Heart left ventricle (tissue), 16 donors: ENCODE measurements at regions of chr19 and their contacts with region 1.

Region 1: DNA sequence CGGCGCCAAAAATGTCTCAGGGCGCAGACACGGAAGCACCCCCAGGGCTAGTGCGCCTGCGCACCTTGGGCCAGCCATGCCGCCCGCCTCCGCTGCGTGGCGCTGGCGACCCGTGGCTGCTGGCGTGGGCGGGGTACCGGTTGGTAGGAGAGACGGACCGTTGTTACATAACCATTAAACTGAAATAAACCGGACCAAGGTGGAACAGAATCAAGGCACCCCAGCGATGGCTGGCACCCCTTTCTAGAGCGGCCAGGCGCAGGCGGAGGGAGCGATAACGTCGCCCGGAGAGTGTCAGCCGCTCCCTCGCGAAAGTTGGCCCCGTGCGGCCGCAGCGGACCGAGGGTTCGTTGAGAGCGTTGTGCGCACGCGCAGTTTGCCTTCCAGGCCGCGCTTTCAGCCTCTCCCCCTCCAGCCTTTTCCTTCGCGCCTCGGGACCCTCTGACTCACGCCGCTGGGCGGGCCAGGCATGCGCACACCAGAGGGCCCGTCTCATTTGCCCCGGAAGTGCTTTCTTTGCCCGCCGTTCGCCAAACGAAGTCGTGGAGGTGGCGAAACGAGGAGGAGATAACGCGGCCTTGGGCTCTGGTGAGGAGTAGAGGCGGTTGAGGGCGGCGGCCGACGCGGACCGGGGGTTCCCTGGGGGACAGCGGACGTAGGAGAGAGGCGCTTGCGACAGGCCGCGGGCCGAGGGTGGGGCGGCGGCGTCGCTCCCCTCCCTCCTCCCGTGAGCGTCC is at the starts of genes PLEKHJ1 and SF3A2:
- DNase-seq: peak; percentile 97 to 99 (median 98)
- ATAC-seq: peak; percentile 91 to 95 (median 94)
- H3K4me3 ChIP-seq: peak within 1 kb of the TSS; percentile 72 to 98 (median 94)
- H3K27ac ChIP-seq: peak within 1 kb of the TSS; percentile 92 to 100 (median 99)
- H3K4me1 ChIP-seq: peaks cover 14 to 75% (median 54%) of the 10 kb centered on the region in 12 donors
- H3K27me3 ChIP-seq: no peaks in the 10 kb centered on the region
- CTCF ChIP-seq: peak; percentile 92 to 100 (median 98)
- POLR2A ChIP-seq: peak in 1 of 2 donors; percentile 52
- total RNA-seq, gene PLEKHJ1: 44.6 to 63.2 (median 46.5) TPM
- total RNA-seq, gene SF3A2: 19.2 to 43.9 (median 28.6) TPM

Region 2: GRCh38 chr19:2161688-2162053 is 74.8 kb before region 1 on chr19:
- intact Hi-C with region 1: loop called in 8 of 10 experiments (anchors 1 to 10 kb)
- DNase-seq: no peak
- ATAC-seq: no peak
- H3K4me3 ChIP-seq: no peak overlapping the region
- H3K27ac ChIP-seq: no peak overlapping the region
- H3K4me1 ChIP-seq: peaks cover 2 to 31% (median 21%) of the 10 kb centered on the region in 12 donors
- H3K27me3 ChIP-seq: no peaks in the 10 kb centered on the region
- CTCF ChIP-seq: no peak
- POLR2A ChIP-seq: no peak

Region 3: GRCh38 chr19:2168619-2169424 is 67.7 kb before region 1 on chr19:
- intact Hi-C with region 1: loop called in 2 of 10 experiments (anchors 1 to 5 kb)
- DNase-seq: peak; percentile 95 to 99 (median 96)
- ATAC-seq: peak; percentile 89 to 95 (median 94)
- H3K4me3 ChIP-seq: peak overlapping the region in 8 of 12 donors; percentile 1 to 48 (median 30)
- H3K27ac ChIP-seq: peak overlapping the region; percentile 72 to 98 (median 94)
- H3K4me1 ChIP-seq: peaks cover 33 to 91% (median 76%) of the 10 kb centered on the region in 12 donors
- H3K27me3 ChIP-seq: no peaks in the 10 kb centered on the region
- CTCF ChIP-seq: peak in 4 of 12 donors; percentile 1 to 27 (median 16)
- POLR2A ChIP-seq: peak in 1 of 2 donors; percentile 52

Region 4: DNA sequence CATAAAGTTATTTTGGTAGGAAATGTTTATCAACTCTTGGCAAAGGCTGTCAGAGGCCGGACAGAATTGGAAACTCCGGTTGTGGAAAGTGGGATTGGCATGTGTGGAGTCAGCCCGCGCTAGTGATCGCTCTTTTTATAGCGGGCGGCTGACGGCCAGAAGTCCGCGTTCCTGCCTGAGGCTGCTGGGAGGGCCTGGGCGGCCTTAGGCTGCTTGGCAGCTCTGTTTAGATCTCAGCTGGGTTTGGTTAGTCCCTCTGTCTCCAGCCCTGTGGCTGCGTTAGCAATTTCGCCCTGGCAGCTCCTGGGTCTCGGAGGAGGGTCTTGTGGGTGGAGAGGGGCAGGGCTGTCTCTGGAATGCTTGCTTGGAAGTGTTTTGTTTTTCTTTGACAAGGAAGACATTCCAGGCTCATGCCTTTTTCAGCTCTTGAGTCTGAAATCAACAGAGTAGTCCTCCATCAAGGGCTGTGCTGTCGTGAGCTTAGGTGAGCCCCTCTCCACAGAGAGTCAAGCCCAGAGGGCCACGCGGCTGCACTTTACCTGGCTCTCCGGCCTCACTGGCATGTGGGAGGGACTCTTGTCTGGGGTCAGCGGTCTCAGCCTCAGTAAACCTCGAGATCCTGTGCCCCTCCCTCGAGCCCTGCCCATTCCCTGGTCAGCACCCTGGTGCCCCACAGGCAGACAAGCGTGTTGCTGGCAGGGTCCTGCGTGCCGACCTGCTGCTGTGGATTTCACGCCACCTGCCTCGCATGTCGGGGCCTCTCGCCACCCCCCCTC is 50.2 kb before region 1 on chr19:
- intact Hi-C with region 1: loop called in 1 of 10 experiments (anchors 1 kb)
- DNase-seq: peak; percentile 87 to 93 (median 88)
- ATAC-seq: peak; percentile 93 to 96 (median 94)
- H3K4me3 ChIP-seq: peak overlapping the region in 7 of 12 donors; percentile 1 to 26 (median 20)
- H3K27ac ChIP-seq: peak overlapping the region; percentile 16 to 89 (median 82)
- H3K4me1 ChIP-seq: peaks cover 5 to 73% (median 44%) of the 10 kb centered on the region in 12 donors
- H3K27me3 ChIP-seq: no peaks in the 10 kb centered on the region
- CTCF ChIP-seq: no peak
- POLR2A ChIP-seq: no peak

Region 5: DNA sequence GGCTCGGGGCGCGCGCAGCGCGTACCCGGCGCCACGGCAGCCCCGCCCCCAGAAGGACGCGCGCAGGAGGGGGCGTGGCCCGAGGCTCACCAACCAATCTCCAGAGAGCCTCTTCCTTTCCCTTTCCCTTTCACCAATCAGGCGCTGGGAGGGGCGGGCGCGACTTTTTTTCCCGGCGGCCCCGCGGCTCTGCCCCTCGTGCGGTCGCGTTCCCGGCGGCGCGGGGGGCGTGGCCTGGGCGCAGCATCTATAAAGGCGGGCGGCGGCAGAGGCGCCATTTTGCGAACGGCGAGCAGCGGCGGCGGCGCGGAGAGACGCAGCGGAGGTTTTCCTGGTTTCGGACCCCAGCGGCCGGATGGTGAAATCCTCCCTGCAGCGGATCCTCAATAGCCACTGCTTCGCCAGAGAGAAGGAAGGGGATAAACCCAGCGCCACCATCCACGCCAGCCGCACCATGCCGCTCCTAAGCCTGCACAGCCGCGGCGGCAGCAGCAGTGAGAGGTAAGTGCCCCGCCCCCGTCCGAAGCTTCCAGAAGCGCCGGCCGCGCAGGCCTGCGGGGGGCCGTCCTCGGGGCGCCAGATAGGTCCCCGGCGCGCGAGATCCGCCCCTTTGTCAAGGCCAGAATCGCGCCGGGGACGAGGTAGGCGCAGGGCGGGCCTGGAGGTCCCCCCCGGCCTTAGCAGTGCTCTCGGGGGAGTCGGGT is 32.9 kb after region 1 on chr19:
- intact Hi-C with region 1: loop called (anchors 1 to 5 kb)
- DNase-seq: peak; percentile 98 to 100 (median 99)
- ATAC-seq: peak; percentile 89 to 92 (median 91)
- H3K4me3 ChIP-seq: peak overlapping the region; percentile 87 to 100 (median 98)
- H3K27ac ChIP-seq: peak overlapping the region; percentile 91 to 100 (median 99)
- H3K4me1 ChIP-seq: peaks cover 9 to 73% (median 42%) of the 10 kb centered on the region in 12 donors
- H3K27me3 ChIP-seq: no peaks in the 10 kb centered on the region
- CTCF ChIP-seq: no peak
- POLR2A ChIP-seq: peak; percentile 100